ENCODE measurements at regions of chr13 and their contacts with region 1.

Region 1: DNA sequence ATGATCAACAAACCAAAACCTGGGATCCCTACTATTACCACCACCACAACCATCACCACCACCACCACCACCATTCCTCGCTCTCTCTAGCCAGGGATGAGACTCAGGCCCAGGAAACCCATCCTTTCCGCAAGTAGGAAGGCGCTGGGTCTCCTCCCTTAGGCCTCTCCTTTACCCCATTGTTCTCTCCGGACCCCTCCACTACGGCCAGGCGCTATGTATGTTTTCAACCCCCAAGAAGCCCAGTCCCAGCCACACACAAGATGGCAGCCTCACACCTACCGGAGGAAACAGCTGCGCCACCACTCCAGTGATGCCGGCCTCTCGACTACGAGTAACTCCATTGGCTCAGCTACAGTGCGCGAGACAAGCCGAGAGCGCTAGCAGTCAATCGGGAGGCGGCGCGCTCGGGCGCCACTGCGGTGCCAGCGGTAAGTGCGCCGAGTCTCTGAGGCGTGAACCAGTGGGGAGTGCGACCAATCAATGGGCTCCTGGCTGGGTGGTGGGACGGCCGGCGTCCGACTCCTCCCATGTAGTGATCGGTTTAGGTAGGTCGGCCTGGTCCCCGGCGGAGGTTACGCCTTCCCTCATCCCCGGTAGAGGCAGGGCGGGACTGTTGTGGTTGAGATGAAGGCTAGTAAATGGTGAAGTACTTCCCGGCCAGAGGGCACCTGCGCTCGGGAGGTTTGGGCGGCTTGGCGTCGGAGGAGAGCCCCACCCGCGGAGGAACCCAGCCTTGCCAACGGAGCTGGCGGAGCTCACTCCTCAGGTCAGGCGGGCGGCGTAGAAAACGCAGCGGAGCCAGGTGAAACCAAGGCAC is at the starts of genes CAB39L and SETDB2:
- DNase-seq: peak; percentile 91 to 100 (median 99)
- ATAC-seq: peak; percentile 95
- H3K4me3 ChIP-seq: peak within 1 kb of the TSS; percentile 92
- H3K4me3 Mint-ChIP-seq: peak within 1 kb of the TSS; percentile 91 to 97 (median 95)
- H3K27ac ChIP-seq: peak within 1 kb of the TSS; percentile 83
- H3K27ac Mint-ChIP-seq: peak within 1 kb of the TSS; percentile 95 to 99 (median 97)
- H3K4me1 ChIP-seq: peaks cover 22 to 35% of the 10 kb centered on the region in 2 donors
- H3K4me1 Mint-ChIP-seq: peaks cover 30 to 58% (median 53%) of the 10 kb centered on the region in 7 donors
- H3K27me3 ChIP-seq: no peaks in the 10 kb centered on the region
- H3K27me3 Mint-ChIP-seq: no peaks in the 10 kb centered on the region
- total RNA-seq, gene CAB39L: 2.9 to 5.9 (median 4.6) TPM
- total RNA-seq, gene SETDB2: 16.7 to 30.0 (median 20.3) TPM

Region 2: DNA sequence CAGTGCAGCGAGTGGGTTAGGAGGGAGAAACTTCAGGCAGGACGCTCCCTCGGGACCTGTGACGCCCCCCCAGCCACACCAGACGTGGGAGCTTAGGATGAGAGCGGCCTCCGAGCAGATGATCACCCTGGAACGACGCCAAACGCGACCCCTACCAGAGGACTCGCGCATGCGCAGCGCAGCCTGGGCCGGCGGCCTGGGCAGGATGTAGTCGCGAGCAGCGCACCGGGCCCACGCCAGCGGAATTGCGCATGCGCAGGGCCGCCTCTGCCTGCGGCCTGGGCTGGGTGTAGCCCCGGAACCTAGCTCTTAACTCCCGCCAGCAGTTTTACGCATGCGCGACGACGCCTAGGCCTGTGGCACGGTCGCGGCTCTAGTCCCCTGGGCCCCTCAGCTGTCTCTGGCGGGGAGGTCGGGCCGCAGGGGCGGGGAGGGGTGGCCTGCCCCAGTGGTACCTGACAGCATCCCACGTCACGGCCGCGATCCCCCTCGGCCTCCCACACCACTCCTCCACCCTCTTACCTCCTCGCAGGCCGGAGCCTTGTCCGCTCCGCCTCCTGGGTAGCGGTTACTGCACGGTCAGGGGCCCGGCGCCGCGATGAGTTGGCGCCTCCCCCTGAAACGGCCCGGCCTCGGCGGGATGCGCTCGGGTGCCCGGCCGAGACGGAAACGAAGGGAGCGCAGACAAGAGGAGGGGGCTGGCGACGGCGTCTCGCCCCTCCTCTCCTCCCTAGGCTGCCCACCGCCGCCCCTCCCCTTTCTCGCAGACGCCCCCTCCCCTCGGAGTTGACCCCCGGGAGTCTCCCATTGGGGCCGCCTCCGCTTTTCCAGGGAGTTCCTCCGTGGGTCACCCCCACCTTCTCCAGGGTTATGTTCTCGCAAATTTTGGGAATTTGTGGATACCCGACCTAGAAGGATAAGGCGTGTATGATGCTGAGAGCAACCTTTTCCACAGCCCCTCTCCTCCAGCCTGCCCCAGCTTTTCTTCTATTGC is 911.1 kb before region 1 on chr13 and contains the start of gene RCBTB2:
- CTCF ChIA-PET with region 1: no interaction called
- POLR2A ChIA-PET with region 1: interaction called, 3 read pairs
- intact Hi-C with region 1: loop called (anchors 1 to 10 kb)
- DNase-seq: peak; percentile 97 to 100 (median 99)
- ATAC-seq: peak; percentile 92
- H3K4me3 ChIP-seq: peak within 1 kb of the TSS; percentile 80
- H3K4me3 Mint-ChIP-seq: peak within 1 kb of the TSS; percentile 83 to 99 (median 94)
- H3K27ac ChIP-seq: peak within 1 kb of the TSS; percentile 96
- H3K27ac Mint-ChIP-seq: peak within 1 kb of the TSS; percentile 98 to 100 (median 99)
- H3K4me1 ChIP-seq: peaks cover 10 to 16% of the 10 kb centered on the region in 2 donors
- H3K4me1 Mint-ChIP-seq: peaks cover 11 to 44% (median 31%) of the 10 kb centered on the region in 7 donors
- H3K27me3 ChIP-seq: no peaks in the 10 kb centered on the region
- H3K27me3 Mint-ChIP-seq: peaks cover 0 to 18% (median 0%) of the 10 kb centered on the region in 5 donors
- total RNA-seq, gene RCBTB2: 7.6 to 17.8 (median 10.1) TPM

Region 3: GRCh38 chr13:49247643-49248621 is 196.0 kb before region 1 on chr13 and contains the start of gene CDADC1:
- CTCF ChIA-PET with region 1: no interaction called
- POLR2A ChIA-PET with region 1: interaction called, 4 read pairs
- intact Hi-C with region 1: loop called (anchors 2 kb)
- DNase-seq: peak; percentile 44 to 93 (median 54)
- ATAC-seq: peak; percentile 90
- H3K4me3 ChIP-seq: peak within 1 kb of the TSS; percentile 93
- H3K4me3 Mint-ChIP-seq: peak within 1 kb of the TSS; percentile 94 to 99 (median 98)
- H3K27ac ChIP-seq: peak within 1 kb of the TSS; percentile 75
- H3K27ac Mint-ChIP-seq: peak within 1 kb of the TSS; percentile 92 to 97 (median 95)
- H3K4me1 ChIP-seq: peaks cover 1 to 3% of the 10 kb centered on the region in 2 donors
- H3K4me1 Mint-ChIP-seq: peaks cover 16 to 59% (median 53%) of the 10 kb centered on the region in 7 donors
- H3K27me3 ChIP-seq: no peaks in the 10 kb centered on the region
- H3K27me3 Mint-ChIP-seq: peaks cover 0 to 25% (median 0%) of the 10 kb centered on the region in 5 donors
- total RNA-seq, gene CDADC1: 10.7 to 21.3 (median 14.5) TPM

Region 4: GRCh38 chr13:49357694-49358093 is 86.2 kb before region 1 on chr13:
- CTCF ChIA-PET with region 1: no interaction called
- POLR2A ChIA-PET with region 1: no interaction called
- intact Hi-C with region 1: no loop called
- DNase-seq: no peak
- ATAC-seq: no peak
- H3K4me3 ChIP-seq: no peak overlapping the region
- H3K4me3 Mint-ChIP-seq: no peak overlapping the region
- H3K27ac ChIP-seq: no peak overlapping the region
- H3K27ac Mint-ChIP-seq: no peak overlapping the region
- H3K4me1 ChIP-seq: no peaks in the 10 kb centered on the region
- H3K4me1 Mint-ChIP-seq: peaks cover 0 to 5% (median 0%) of the 10 kb centered on the region in 7 donors
- H3K27me3 ChIP-seq: no peaks in the 10 kb centered on the region
- H3K27me3 Mint-ChIP-seq: no peaks in the 10 kb centered on the region

Region 5: GRCh38 chr13:49464621-49465325 is 20.9 kb after region 1 on chr13:
- CTCF ChIA-PET with region 1: no interaction called
- POLR2A ChIA-PET with region 1: interaction called, 6 read pairs
- intact Hi-C with region 1: loop called in 1 of 2 experiments (anchors 2 kb)
- DNase-seq: no peak
- ATAC-seq: no peak
- H3K4me3 ChIP-seq: no peak overlapping the region
- H3K4me3 Mint-ChIP-seq: no peak overlapping the region
- H3K27ac ChIP-seq: no peak overlapping the region
- H3K27ac Mint-ChIP-seq: no peak overlapping the region
- H3K4me1 ChIP-seq: no peaks in the 10 kb centered on the region
- H3K4me1 Mint-ChIP-seq: peaks cover 0 to 4% (median 0%) of the 10 kb centered on the region in 7 donors
- H3K27me3 ChIP-seq: no peaks in the 10 kb centered on the region
- H3K27me3 Mint-ChIP-seq: no peaks in the 10 kb centered on the region

Region 6: DNA sequence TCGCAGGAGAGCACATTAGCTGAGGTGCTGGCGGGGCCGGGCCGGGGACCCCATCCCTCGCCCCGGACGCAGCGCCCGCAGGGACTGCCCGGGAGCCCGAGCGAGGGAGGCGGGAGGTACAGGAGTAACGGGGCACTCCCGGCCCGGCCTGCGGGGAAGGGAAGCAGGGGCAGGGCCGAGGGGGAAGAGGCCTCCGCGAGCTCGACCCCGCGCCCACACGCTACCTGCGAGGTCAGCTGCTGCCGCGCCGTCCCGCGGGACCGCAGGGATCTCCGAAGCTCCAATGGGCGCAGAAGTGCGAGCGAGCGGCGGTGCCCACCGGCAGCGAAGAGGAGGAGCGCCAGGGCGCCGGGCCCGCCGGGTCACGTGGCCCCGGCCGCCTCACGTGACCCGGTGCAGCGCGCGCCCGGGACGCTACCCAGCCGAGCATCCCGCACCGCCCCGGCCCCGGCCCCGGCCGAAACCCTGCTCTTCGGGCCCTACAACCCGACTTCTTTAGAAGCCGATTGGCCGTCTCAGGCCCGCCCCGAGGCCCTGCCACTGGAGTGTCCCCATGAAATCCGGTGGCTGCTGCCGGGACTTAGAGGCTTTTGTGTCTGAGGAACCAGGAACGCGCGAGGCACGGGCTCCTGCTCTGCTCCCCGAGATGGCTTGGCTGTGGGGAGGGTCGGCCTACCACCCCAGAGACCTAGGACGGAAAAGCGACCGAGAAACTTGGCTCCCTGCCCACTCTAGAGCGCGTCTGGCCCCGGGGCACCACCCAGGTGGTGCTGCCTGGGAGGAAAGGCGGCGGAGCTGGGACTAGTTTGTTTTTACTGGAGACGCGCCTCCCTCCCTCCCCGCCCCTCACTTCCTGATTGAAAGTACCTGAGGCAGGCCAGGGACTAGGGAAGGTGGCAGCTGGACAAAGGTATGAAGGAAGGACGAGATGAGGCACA is 141.6 kb after region 1 on chr13 and contains the start of gene RCBTB1:
- CTCF ChIA-PET with region 1: no interaction called
- POLR2A ChIA-PET with region 1: interaction called, 15 read pairs
- intact Hi-C with region 1: loop called (anchors 1 kb)
- DNase-seq: peak; percentile 47 to 74 (median 66)
- ATAC-seq: peak; percentile 97
- H3K4me3 ChIP-seq: peak within 1 kb of the TSS; percentile 56
- H3K4me3 Mint-ChIP-seq: peak within 1 kb of the TSS; percentile 83 to 100 (median 92)
- H3K27ac ChIP-seq: peak within 1 kb of the TSS; percentile 82
- H3K27ac Mint-ChIP-seq: peak within 1 kb of the TSS; percentile 86 to 96 (median 94)
- H3K4me1 ChIP-seq: peaks cover 10 to 16% of the 10 kb centered on the region in 2 donors
- H3K4me1 Mint-ChIP-seq: peaks cover 32 to 53% (median 50%) of the 10 kb centered on the region in 7 donors
- H3K27me3 ChIP-seq: no peaks in the 10 kb centered on the region
- H3K27me3 Mint-ChIP-seq: peaks cover 0 to 3% (median 0%) of the 10 kb centered on the region in 5 donors
- total RNA-seq, gene RCBTB1: 16.3 to 22.2 (median 20.4) TPM

Region 7: GRCh38 chr13:49996951-49997895 is 553.3 kb after region 1 on chr13 and contains the start of gene TRIM13:
- CTCF ChIA-PET with region 1: no interaction called
- POLR2A ChIA-PET with region 1: interaction called, 7 read pairs
- intact Hi-C with region 1: loop called (anchors 2 kb)
- DNase-seq: peak; percentile 64 to 85 (median 82)
- ATAC-seq: peak; percentile 88
- H3K4me3 ChIP-seq: peak within 1 kb of the TSS; percentile 97
- H3K4me3 Mint-ChIP-seq: peak within 1 kb of the TSS; percentile 83 to 95 (median 86)
- H3K27ac ChIP-seq: peak within 1 kb of the TSS; percentile 89
- H3K27ac Mint-ChIP-seq: peak within 1 kb of the TSS; percentile 84 to 92 (median 87)
- H3K4me1 ChIP-seq: peaks cover 25 to 31% of the 10 kb centered on the region in 2 donors
- H3K4me1 Mint-ChIP-seq: peaks cover 16 to 57% (median 49%) of the 10 kb centered on the region in 7 donors
- H3K27me3 ChIP-seq: no peaks in the 10 kb centered on the region
- H3K27me3 Mint-ChIP-seq: no peaks in the 10 kb centered on the region
- total RNA-seq, gene TRIM13: 18.3 to 27.1 (median 21.8) TPM

Region 8: DNA sequence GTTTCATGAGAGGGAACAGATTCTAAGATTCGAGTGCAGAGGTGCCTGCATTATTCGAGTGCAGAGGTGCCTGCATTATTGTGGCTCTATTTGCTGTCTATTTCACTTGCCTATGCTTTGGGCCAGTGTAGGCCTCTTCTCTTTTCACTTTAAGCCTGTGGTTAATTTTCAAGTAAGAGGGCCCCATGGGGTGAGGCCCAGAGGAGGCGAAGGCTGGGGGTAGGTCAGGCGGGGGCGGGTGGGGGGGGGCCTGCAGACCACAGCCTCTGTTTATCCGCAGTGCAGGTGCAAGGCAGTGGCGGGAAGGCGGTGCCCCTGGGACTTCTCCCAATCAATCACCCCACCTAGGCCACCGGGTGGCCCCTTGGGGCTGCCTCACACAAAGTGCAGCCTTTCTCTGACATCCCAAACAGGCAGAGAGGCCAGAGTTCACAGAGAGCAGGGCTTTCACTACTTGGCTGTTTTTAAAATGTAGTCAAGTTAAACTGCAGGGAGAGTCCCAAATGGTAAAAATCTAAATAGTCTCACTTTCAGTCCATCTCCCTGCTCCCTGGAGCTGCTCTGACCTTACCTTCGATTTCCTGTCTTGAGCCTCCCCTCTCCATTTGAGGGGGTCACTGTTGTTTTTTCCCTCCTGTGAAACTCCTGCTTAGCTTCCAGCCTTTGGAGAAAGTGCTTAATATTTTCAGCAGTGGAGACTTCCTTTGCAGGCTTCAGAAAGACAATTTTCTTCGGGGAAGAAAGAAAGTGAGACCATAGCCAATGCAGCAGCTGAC is 1150.5 kb after region 1 on chr13:
- CTCF ChIA-PET with region 1: no interaction called
- POLR2A ChIA-PET with region 1: no interaction called
- intact Hi-C with region 1: no loop called
- DNase-seq: peak in 2 of 9 donors; percentile 13 to 40
- ATAC-seq: peak; percentile 38
- H3K4me3 ChIP-seq: no peak overlapping the region
- H3K4me3 Mint-ChIP-seq: peak overlapping the region; percentile 13 to 73 (median 61)
- H3K27ac ChIP-seq: no peak overlapping the region
- H3K27ac Mint-ChIP-seq: peak overlapping the region; percentile 49 to 90 (median 77)
- H3K4me1 ChIP-seq: peaks cover 0 to 13% of the 10 kb centered on the region in 2 donors
- H3K4me1 Mint-ChIP-seq: peaks cover 12 to 43% (median 32%) of the 10 kb centered on the region in 7 donors
- H3K27me3 ChIP-seq: no peaks in the 10 kb centered on the region
- H3K27me3 Mint-ChIP-seq: peaks cover 0 to 7% (median 3%) of the 10 kb centered on the region in 5 donors

Measured in naive thymus-derived CD4-positive, alpha-beta T cell (primary cell).